ENCODE measurements at regions of chr16 and their contacts with region 1.

Region 1: GRCh38 chr16:30874821-30875717 is 18.8 kb downstream of the BCL7C start:
- DNase-seq: peak; percentile 89 to 94
- ATAC-seq: peak; percentile 69 to 94 (median 86)
- H3K4me3 ChIP-seq: peak overlapping the region; percentile 71
- H3K4me3 Mint-ChIP-seq: peak overlapping the region; percentile 97
- H3K27ac ChIP-seq: peak overlapping the region; percentile 83
- H3K27ac Mint-ChIP-seq: peak overlapping the region; percentile 92 to 99
- H3K4me1 ChIP-seq: peaks cover 43% of the 10 kb centered on the region
- H3K4me1 Mint-ChIP-seq: peaks cover 39 to 54% of the 10 kb centered on the region in 2 donors
- H3K27me3 ChIP-seq: no peaks in the 10 kb centered on the region
- H3K27me3 Mint-ChIP-seq: no peaks in the 10 kb centered on the region
- CTCF ChIP-seq: no peak

Region 2: GRCh38 chr16:30902029-30902972 is 27.2 kb after region 1 on chr16:
- intact Hi-C with region 1: loop called (anchors 2 kb)
- DNase-seq: peak; percentile 68 to 82
- ATAC-seq: peak; percentile 86 to 93 (median 90)
- H3K4me3 ChIP-seq: peak overlapping the region; percentile 51
- H3K4me3 Mint-ChIP-seq: peak overlapping the region; percentile 99
- H3K27ac ChIP-seq: peak overlapping the region; percentile 85
- H3K27ac Mint-ChIP-seq: peak overlapping the region; percentile 96 to 99
- H3K4me1 ChIP-seq: peaks cover 43% of the 10 kb centered on the region
- H3K4me1 Mint-ChIP-seq: peaks cover 24 to 27% of the 10 kb centered on the region in 2 donors
- H3K27me3 ChIP-seq: no peaks in the 10 kb centered on the region
- H3K27me3 Mint-ChIP-seq: no peaks in the 10 kb centered on the region
- CTCF ChIP-seq: no peak